Activated CD4-positive, alpha-beta memory T cell treated with anti-CD3 and anti-CD28 coated beads for 36 hours (primary cell): ENCODE measurements at regions of chrX and their contacts with region 1.

Region 1: DNA sequence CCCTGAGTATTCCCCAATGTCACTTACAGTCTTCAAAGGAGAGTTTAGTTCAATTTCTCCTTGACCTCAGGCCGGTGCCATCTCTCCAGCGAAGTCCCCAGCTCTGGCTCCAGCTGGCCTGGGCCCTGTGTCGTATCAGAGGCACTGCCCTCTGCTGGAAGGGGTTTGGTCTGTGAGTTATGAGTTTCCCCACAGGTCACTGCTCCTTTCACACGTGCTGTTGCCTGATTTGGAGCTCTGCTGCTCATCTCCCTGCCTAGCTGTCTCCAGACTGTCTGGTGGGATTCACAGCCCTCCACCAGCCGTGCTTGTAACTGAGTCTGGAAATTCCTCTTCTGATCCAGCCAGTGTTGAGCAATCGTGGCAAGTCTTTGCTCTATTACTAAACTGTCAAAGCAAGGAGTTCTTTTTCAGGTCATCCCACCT is at the start of gene RAP2C:
- DNase-seq: peak; percentile 74
- H3K4me3 Mint-ChIP-seq: peak within 1 kb of the TSS; percentile 83
- H3K27ac Mint-ChIP-seq: peak within 1 kb of the TSS; percentile 96
- H3K4me1 Mint-ChIP-seq: peaks cover 15% of the 10 kb centered on the region
- H3K27me3 Mint-ChIP-seq: no peaks in the 10 kb centered on the region
- total RNA-seq, gene RAP2C: 41.2 to 43.7 TPM

Region 2: GRCh38 chrX:131830400-131831184 is 388.8 kb before region 1 on chrX:
- CTCF ChIA-PET with region 1: interaction called, 18 read pairs
- POLR2A ChIA-PET with region 1: interaction called, 3 read pairs
- intact Hi-C with region 1: loop called (anchors 1 kb)
- DNase-seq: peak; percentile 81
- H3K4me3 Mint-ChIP-seq: peak overlapping the region; percentile 85
- H3K27ac Mint-ChIP-seq: peak overlapping the region; percentile 91
- H3K4me1 Mint-ChIP-seq: peaks cover 33% of the 10 kb centered on the region
- H3K27me3 Mint-ChIP-seq: no peaks in the 10 kb centered on the region

Region 3: DNA sequence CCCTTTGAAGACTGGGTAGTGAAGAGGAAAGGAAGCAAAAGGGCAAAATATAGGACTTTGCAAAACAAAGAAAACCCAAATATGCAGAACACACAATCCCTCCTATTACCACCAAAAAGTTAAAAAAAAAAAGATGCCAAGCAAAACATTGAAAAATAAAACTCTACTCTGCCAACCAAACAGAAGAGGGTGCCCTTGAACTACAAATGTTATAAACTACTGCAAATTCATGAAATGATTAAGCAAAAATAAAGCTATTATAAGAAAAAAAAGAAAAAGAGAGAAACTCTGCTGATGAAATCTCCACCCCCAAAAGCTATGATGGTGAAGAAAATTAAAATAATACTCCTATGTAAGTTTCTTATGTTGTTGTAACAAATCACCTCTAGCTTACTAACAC is 364.8 kb before region 1 on chrX:
- CTCF ChIA-PET with region 1: interaction called, 11 read pairs
- POLR2A ChIA-PET with region 1: no interaction called
- intact Hi-C with region 1: no loop called
- DNase-seq: no peak
- H3K4me3 Mint-ChIP-seq: no peak overlapping the region
- H3K27ac Mint-ChIP-seq: no peak overlapping the region
- H3K4me1 Mint-ChIP-seq: no peaks in the 10 kb centered on the region
- H3K27me3 Mint-ChIP-seq: no peaks in the 10 kb centered on the region

Region 4: DNA sequence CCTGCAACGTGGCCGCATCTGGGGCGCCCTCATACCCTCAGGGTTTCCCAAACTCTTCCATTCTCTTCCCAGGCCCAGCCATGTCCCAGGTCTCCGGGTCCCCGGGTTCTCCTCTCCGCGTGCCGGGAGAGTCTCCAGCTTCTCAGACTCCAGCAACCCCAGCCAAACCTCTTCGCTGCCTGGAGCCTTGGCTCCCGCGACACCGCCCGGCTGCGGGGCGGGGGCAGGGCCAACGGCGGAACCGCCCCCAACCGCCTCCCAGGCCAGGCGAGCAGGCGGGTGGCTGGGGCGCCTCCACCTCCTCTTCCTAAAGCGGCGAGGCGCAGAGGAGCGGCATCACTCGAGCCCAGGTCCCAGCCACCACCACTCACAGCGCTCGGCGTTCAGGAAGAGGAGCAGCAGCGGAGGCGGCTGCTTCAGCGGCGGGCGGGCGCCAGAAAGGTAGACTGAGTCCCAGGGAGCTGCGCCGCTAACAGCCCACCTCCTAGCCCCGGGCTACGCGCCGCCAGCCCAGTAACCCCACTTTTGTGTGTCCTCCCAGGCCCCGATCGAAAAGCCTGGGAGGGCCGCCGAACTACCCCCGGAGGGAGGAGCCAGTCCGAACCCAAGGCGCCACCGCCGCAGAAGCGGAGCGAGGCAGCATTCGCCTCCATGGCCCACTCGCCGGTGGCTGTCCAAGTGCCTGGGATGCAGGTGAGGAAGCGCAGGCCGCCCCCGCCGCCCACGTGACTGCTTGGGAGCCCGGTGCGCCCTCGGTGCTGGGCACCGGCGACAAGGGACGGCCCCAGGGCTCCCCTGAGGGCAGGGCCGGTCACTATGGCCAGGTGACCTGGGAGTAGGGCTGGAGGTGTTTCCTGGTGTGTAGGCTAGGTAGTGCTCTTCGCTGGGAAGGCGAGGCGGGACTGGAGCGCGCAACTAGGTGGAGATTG is 196.1 kb before region 1 on chrX and contains the start of gene STK26:
- CTCF ChIA-PET with region 1: interaction called, 5 read pairs
- POLR2A ChIA-PET with region 1: interaction called, 3 read pairs
- intact Hi-C with region 1: loop called (anchors 1 kb)
- DNase-seq: peak; percentile 84
- H3K4me3 Mint-ChIP-seq: peak within 1 kb of the TSS; percentile 85
- H3K27ac Mint-ChIP-seq: peak within 1 kb of the TSS; percentile 94
- H3K4me1 Mint-ChIP-seq: peaks cover 29% of the 10 kb centered on the region
- H3K27me3 Mint-ChIP-seq: no peaks in the 10 kb centered on the region
- total RNA-seq, gene STK26: 60.9 to 64.0 TPM

Region 5: DNA sequence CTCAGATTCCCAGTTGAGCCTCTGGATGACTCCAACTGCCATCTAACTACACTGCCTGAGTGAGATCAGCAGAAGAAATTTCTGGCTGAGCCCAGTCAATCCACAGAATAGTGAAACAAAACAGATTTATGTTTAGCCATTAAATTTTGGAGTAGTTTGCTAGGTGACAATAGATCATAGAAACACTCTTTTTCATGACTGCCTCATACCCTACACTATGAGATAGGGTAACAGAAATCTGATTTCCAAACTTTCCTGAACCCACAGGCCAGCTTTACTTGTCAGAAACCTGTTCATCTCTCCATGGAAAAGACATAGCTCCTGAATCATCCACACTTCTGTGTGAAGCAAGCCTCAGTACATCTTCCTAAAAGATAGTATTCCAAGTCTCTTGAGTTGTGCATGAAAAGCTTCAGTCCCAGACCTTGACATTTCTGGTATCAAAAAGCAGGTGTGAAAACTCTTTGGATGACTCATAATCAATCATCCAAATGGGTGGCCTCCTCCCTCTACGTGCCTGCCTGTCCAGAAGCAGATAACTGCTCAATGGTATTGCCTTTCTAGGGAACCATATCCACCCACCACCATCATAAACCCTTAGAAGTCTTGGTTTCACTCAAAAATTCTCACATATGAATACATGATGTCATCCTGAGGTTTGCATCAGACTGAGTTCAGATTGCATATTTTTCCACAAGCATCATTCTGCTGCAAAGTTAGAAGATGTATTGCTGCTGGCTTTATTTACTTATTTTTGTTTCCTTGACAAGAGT is 47.4 kb after region 1 on chrX:
- CTCF ChIA-PET with region 1: no interaction called
- POLR2A ChIA-PET with region 1: no interaction called
- intact Hi-C with region 1: loop called (anchors 2 kb)
- DNase-seq: peak; percentile 24
- H3K4me3 Mint-ChIP-seq: no peak overlapping the region
- H3K27ac Mint-ChIP-seq: no peak overlapping the region
- H3K4me1 Mint-ChIP-seq: peaks cover 9% of the 10 kb centered on the region
- H3K27me3 Mint-ChIP-seq: no peaks in the 10 kb centered on the region

Region 6: DNA sequence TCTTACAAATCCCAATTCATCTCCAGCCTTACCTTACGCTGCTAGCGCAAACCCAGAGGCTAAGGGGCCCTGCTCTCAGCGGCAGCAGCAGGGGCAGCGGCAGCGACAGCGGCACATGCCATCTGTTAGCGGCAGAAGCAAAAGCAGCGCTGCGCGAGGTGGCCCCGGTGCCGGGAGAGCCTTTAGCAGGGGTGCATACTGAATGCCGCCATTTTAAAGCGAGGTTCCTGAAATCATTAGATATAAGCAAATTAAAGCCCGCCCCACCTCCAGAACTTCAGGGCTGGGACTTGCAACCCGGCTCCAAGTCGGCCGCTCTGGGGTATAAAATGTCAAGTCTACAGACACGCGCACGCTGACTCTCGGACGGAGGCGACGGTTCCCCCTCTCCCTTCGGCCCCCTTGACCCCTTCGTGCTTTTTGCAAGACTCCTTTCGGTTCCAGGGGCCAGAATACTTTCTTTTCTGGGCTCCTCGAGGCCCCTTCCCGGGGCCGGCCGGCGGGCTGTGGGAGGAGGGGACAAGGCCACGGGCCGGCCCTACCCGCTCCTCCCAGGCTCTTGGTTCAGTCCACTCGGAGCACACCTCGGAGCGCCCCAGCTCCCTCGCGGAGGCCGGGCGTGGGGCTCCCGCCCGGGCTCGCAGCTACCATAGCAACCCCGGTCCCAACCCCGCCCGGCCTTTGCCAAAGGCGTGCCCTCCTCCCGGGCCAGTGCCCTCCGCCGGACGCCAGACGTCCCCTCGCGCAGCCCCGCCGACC is 269.6 kb after region 1 on chrX and contains the start of gene MBNL3:
- CTCF ChIA-PET with region 1: no interaction called
- POLR2A ChIA-PET with region 1: interaction called, 3 read pairs
- intact Hi-C with region 1: loop called (anchors 1 kb)
- DNase-seq: peak; percentile 68
- H3K4me3 Mint-ChIP-seq: peak within 1 kb of the TSS; percentile 88
- H3K27ac Mint-ChIP-seq: peak within 1 kb of the TSS; percentile 91
- H3K4me1 Mint-ChIP-seq: peaks cover 38% of the 10 kb centered on the region
- H3K27me3 Mint-ChIP-seq: no peaks in the 10 kb centered on the region
- total RNA-seq, gene MBNL3: 13.7 to 14.7 TPM

Region 7: GRCh38 chrX:132776486-132777210 is 557.3 kb after region 1 on chrX:
- CTCF ChIA-PET with region 1: no interaction called
- POLR2A ChIA-PET with region 1: no interaction called
- intact Hi-C with region 1: loop called (anchors 1 kb)
- DNase-seq: peak; percentile 8
- H3K4me3 Mint-ChIP-seq: no peak overlapping the region
- H3K27ac Mint-ChIP-seq: no peak overlapping the region
- H3K4me1 Mint-ChIP-seq: peaks cover 24% of the 10 kb centered on the region
- H3K27me3 Mint-ChIP-seq: no peaks in the 10 kb centered on the region